ENCODE measurements at regions of chr4 and their contacts with region 1.

Region 1: GRCh38 chr4:102826890-102827673 is at the start of gene UBE2D3:
- DNase-seq: peak; percentile 71 to 92
- H3K4me3 ChIP-seq: peak within 1 kb of the TSS; percentile 85 to 98 (median 94)
- H3K27ac ChIP-seq: peak within 1 kb of the TSS; percentile 98
- H3K4me1 ChIP-seq: peaks cover 0 to 17% (median 9%) of the 10 kb centered on the region in 4 experiments; a peak in 5 of 7 replicates
- H3K27me3 ChIP-seq: no peaks in the 10 kb centered on the region
- CTCF ChIP-seq: no peak; a peak in 1 of 4 replicates
- EP300 ChIP-seq: peak; percentile 25 to 62; a peak in 2 of 3 replicates
- POLR2A ChIP-seq: peak; percentile 94
- RAD21 ChIP-seq: no peak; a peak in 1 of 4 replicates
- total RNA-seq, gene UBE2D3: 377 and 396 TPM in 2 replicates

Region 2: GRCh38 chr4:102734591-102735385 is 92.3 kb before region 1 on chr4:
- CTCF ChIA-PET with region 1: interaction called, 3 read pairs
- POLR2A ChIA-PET with region 1: interaction called, 16 read pairs
- DNase-seq: no peak
- H3K4me3 ChIP-seq: no peak overlapping the region
- H3K27ac ChIP-seq: no peak overlapping the region
- H3K4me1 ChIP-seq: 0 out of 7 replicates have a peak, but pooled peaks cover 0 to 2% (median 0%) of the 10 kb centered on the region in 4 experiments
- H3K27me3 ChIP-seq: no peaks in the 10 kb centered on the region
- CTCF ChIP-seq: no peak
- EP300 ChIP-seq: no peak
- POLR2A ChIP-seq: no peak
- RAD21 ChIP-seq: no peak

Region 3: GRCh38 chr4:102780476-102781144 is 46.5 kb before region 1 on chr4:
- CTCF ChIA-PET with region 1: no interaction called
- POLR2A ChIA-PET with region 1: interaction called, 10 read pairs
- DNase-seq: no peak
- H3K4me3 ChIP-seq: no peak overlapping the region
- H3K27ac ChIP-seq: no peak overlapping the region
- H3K4me1 ChIP-seq: no peaks in the 10 kb centered on the region
- H3K27me3 ChIP-seq: no peaks in the 10 kb centered on the region
- CTCF ChIP-seq: no peak
- EP300 ChIP-seq: no peak
- POLR2A ChIP-seq: no peak
- RAD21 ChIP-seq: no peak

Region 4: DNA sequence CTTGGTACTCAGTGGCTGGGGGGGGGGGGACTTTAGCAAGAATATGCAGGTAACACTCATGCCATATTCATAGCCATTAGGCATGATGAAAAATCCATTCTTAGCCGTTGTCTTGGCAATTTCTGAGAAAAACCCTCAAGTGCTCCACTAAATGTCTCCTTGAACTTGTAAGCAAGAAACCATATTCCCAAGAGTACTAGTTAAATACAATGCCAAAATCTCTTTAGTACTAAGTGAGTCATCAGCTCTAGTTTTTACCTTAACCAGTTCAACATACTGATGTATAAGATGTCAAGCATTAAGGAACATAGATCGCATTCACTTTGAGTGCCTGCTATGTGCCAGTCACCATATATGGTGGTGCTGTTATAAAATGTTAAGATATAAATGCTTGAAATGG is 27.3 kb before region 1 on chr4:
- CTCF ChIA-PET with region 1: no interaction called
- POLR2A ChIA-PET with region 1: interaction called, 15 read pairs
- DNase-seq: no peak
- H3K4me3 ChIP-seq: no peak overlapping the region
- H3K27ac ChIP-seq: no peak overlapping the region
- H3K4me1 ChIP-seq: peaks cover 0 to 3% (median 1%) of the 10 kb centered on the region in 4 experiments; a peak in 1 of 7 replicates
- H3K27me3 ChIP-seq: no peaks in the 10 kb centered on the region
- CTCF ChIP-seq: no peak
- EP300 ChIP-seq: no peak
- POLR2A ChIP-seq: no peak
- RAD21 ChIP-seq: no peak

Region 5: GRCh38 chr4:102815981-102816380 is 11.1 kb before region 1 on chr4:
- CTCF ChIA-PET with region 1: interaction called, 7 read pairs
- POLR2A ChIA-PET with region 1: interaction called, 162 read pairs
- DNase-seq: no peak
- H3K4me3 ChIP-seq: no peak overlapping the region
- H3K27ac ChIP-seq: no peak overlapping the region
- H3K4me1 ChIP-seq: peaks cover 0 to 16% (median 5%) of the 10 kb centered on the region in 4 experiments; a peak in 4 of 7 replicates
- H3K27me3 ChIP-seq: no peaks in the 10 kb centered on the region
- CTCF ChIP-seq: no peak
- EP300 ChIP-seq: no peak
- POLR2A ChIP-seq: no peak
- RAD21 ChIP-seq: no peak

Region 6: GRCh38 chr4:102849579-102850104 is 22.6 kb after region 1 on chr4:
- CTCF ChIA-PET with region 1: no interaction called
- POLR2A ChIA-PET with region 1: interaction called, 34 read pairs
- DNase-seq: no peak
- H3K4me3 ChIP-seq: no peak overlapping the region
- H3K27ac ChIP-seq: no peak overlapping the region
- H3K4me1 ChIP-seq: peaks cover 0 to 3% (median 0%) of the 10 kb centered on the region in 4 experiments; a peak in 1 of 7 replicates
- H3K27me3 ChIP-seq: no peaks in the 10 kb centered on the region
- CTCF ChIP-seq: no peak
- EP300 ChIP-seq: no peak
- POLR2A ChIP-seq: no peak
- RAD21 ChIP-seq: no peak

Region 7: GRCh38 chr4:102878901-102879300 is 51.8 kb after region 1 on chr4:
- CTCF ChIA-PET with region 1: no interaction called
- POLR2A ChIA-PET with region 1: interaction called, 21 read pairs
- DNase-seq: no peak
- H3K4me3 ChIP-seq: no peak overlapping the region
- H3K27ac ChIP-seq: no peak overlapping the region
- H3K4me1 ChIP-seq: peaks cover 0 to 8% (median 2%) of the 10 kb centered on the region in 4 experiments; a peak in 2 of 7 replicates
- H3K27me3 ChIP-seq: no peaks in the 10 kb centered on the region
- CTCF ChIP-seq: no peak
- EP300 ChIP-seq: no peak
- POLR2A ChIP-seq: no peak
- RAD21 ChIP-seq: no peak